ENCODE measurements at regions of chr1 and their contacts with region 1.

Region 1: GRCh38 chr1:192639607-192640368 is 3.8 kb downstream of the RGS13 start:
- DNase-seq: peak; percentile 12
- H3K4me3 Mint-ChIP-seq: no peak overlapping the region
- H3K27ac Mint-ChIP-seq: no peak overlapping the region
- H3K4me1 Mint-ChIP-seq: peaks cover 18% of the 10 kb centered on the region
- H3K27me3 Mint-ChIP-seq: peaks cover 7% of the 10 kb centered on the region

Region 2: DNA sequence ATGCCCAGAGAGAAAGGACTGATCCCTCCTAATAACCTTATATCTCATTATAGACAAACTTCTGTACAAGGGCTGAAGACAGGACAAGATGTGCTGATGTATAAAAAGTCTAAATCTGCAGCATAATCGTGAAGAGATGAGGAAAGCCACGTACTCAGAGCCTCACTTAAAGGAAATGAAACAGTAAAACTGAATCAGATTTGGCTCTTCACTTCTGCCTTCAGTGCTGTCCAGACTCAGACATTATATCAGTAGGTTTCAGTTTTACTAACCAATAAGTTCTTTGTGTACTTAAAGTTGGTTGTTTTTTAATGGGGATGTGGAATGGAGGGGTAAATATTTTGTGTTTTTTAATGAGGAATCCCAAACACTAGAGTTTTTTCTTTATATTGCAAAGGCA is 109.5 kb before region 1 on chr1:
- CTCF ChIA-PET with region 1: no interaction called
- intact Hi-C with region 1: loop called (anchors 1 kb)
- DNase-seq: no peak
- H3K4me3 Mint-ChIP-seq: no peak overlapping the region
- H3K27ac Mint-ChIP-seq: no peak overlapping the region
- H3K4me1 Mint-ChIP-seq: peaks cover 20% of the 10 kb centered on the region
- H3K27me3 Mint-ChIP-seq: no peaks in the 10 kb centered on the region

Region 3: GRCh38 chr1:192601567-192601966 is 38.2 kb before region 1 on chr1:
- CTCF ChIA-PET with region 1: no interaction called
- intact Hi-C with region 1: loop called (anchors 1 kb)
- DNase-seq: no peak
- H3K4me3 Mint-ChIP-seq: no peak overlapping the region
- H3K27ac Mint-ChIP-seq: no peak overlapping the region
- H3K4me1 Mint-ChIP-seq: peaks cover 26% of the 10 kb centered on the region
- H3K27me3 Mint-ChIP-seq: no peaks in the 10 kb centered on the region

Region 4: DNA sequence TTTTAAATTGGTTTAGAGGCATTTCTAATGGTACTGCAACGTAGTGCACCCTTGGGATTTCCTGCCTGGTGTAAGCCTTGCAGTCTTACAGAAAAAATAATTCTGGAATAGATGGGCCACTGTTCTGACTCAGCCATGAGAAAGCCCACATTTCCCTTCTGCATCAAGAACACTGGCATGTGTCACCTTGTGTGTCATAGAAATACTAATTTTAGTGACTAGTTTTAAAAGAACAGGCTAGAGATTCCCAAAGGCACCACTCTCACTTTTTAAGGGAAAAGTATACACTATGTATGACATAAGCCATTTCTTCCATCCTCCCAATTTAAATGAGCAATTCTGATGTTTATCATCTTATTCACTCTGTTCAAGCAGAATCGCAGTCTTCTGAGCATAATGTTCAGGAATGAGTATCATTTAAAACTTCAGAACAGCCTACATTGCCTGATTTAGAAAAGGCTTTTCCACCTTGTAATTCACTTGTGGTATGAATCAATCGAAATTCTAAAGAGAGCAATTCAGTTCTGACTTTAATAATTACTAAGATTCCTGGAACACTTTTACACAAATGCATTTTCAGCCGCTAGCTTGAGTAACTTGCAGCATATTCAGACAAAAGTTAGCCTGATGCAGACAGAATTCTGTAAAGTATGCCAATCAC is 14.9 kb after region 1 on chr1:
- CTCF ChIA-PET with region 1: no interaction called
- intact Hi-C with region 1: loop called (anchors 1 kb)
- DNase-seq: peak; percentile 9
- H3K4me3 Mint-ChIP-seq: no peak overlapping the region
- H3K27ac Mint-ChIP-seq: no peak overlapping the region
- H3K4me1 Mint-ChIP-seq: peaks cover 8% of the 10 kb centered on the region
- H3K27me3 Mint-ChIP-seq: peaks cover 11% of the 10 kb centered on the region

Region 5: DNA sequence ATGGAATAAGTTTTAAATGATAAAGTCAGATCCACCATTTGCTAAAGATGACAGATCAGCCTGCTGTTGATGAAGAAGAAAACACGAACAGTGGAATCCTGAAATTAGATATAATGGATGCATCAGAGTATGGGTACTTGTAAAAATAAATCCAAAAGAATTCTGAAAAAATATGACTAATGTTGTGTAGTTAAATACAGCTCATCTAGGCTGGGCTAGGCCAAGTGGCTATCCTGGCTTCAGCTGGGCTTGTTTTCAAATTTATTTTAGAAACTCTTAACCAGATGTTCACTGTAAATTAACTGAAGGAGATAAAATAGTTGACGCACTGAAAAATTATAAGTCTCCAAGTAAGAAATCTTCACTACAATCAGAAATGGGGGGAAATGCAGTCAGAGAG is 161.7 kb after region 1 on chr1:
- CTCF ChIA-PET with region 1: no interaction called
- intact Hi-C with region 1: no loop called
- DNase-seq: no peak
- H3K4me3 Mint-ChIP-seq: no peak overlapping the region
- H3K27ac Mint-ChIP-seq: no peak overlapping the region
- H3K4me1 Mint-ChIP-seq: peaks cover 2% of the 10 kb centered on the region
- H3K27me3 Mint-ChIP-seq: no peaks in the 10 kb centered on the region

Region 6: DNA sequence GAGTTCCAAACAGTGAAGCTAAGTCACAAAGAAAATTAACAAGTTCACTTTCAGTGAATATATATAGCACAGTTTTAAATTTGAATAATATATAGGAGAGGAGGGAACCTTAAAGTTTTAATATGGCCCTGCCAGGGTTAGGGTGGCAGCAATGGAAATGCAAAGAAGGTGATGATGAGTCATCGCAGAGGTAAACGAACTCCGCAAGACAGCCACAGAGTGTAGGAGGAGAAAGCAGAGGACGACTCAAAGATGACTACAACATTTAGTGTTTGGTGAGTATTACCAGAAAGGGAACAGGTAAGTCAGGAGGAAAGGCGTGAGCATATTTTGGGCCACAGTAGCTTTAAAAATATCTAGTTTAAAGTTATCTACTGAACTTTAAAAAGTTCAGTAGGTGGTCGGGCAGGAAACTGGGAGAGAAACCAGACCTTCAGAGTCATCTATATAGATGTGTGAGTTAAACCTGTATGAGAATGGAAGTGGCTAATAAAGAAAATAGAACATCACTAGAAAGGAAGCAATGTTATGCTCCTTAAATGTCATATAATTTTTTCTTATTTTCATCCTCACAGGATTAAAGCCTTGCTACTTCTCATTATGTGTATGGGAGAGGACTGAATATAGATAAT is 343.7 kb after region 1 on chr1:
- CTCF ChIA-PET with region 1: no interaction called
- intact Hi-C with region 1: loop called (anchors 1 kb)
- DNase-seq: peak; percentile 58
- H3K4me3 Mint-ChIP-seq: no peak overlapping the region
- H3K27ac Mint-ChIP-seq: peak overlapping the region; percentile 67
- H3K4me1 Mint-ChIP-seq: peaks cover 25% of the 10 kb centered on the region
- H3K27me3 Mint-ChIP-seq: no peaks in the 10 kb centered on the region

Measured in activated naive CD4-positive, alpha-beta T cell treated with anti-CD3 and anti-CD28 coated beads for 36 hours (primary cell).